Heart left ventricle (tissue), 16 donors: ENCODE measurements at regions of chr17 and their contacts with region 1.

Region 1: DNA sequence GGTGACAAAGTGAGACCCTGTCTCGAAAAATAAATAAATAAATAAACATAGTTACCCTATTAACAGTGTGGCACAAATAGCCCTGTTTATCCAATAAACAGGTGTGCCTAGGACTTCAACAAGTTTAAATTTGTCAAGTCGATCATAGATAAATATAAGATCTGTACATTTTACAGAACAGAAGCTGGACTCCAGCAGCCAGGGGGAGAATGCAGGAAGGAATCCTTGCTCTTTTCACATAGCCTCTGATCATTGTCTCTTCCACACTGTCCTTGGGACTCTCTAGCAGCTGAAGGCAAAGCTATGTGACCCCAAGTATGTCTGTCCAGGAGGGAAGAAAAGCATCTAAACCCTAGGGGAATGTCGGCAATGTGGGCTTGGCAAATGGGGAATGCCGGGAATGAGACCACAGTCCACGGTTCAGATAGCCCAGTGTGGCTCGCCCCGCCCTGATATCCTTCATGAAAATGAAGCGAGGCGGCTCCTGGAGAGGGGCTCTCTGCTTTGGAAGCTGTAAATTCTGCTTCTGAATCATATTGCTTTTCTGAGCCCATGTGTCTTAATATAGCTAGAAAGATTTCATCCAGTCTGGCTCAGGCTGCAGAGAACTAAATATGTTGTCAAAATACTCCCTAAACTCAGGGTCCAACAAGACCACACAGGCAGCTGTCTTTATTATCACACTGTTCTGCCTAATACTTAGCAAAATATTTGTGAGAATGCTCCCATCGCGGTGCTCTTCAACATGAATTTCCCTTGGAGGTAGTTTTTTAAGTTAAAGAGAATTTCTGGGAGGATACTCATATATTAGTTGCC is 24.9 kb upstream of the GRB2 start:
- DNase-seq: no peak
- ATAC-seq: no peak
- H3K4me3 ChIP-seq: no peak overlapping the region
- H3K27ac ChIP-seq: peak overlapping the region in 1 of 12 donors; percentile 73
- H3K4me1 ChIP-seq: peaks cover 0 to 20% (median 5%) of the 10 kb centered on the region in 12 donors
- H3K27me3 ChIP-seq: no peaks in the 10 kb centered on the region
- CTCF ChIP-seq: no peak
- POLR2A ChIP-seq: no peak

Region 2: DNA sequence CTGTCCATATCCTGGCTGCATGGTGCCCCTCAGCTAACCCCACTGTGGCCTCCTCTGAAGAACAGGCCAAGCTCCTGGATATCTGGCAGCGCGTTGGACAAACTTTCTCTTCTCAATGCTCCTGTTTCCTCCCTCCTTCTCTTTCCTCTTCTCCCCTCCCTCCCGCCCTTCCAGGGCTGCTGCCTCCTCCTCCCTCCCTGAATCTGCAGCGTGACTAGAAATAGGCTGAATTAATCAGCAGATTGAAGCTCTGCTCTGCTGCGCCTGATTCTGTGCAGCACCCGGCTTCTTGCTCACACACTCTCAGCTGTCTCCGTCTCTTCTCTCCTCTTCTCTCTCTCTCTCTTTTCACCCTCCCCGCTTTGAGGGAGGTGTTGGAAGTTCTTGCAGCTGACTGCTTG is 45.9 kb after region 1 on chr17:
- intact Hi-C with region 1: loop called in 1 of 10 experiments (anchors 10 kb)
- DNase-seq: peak in 2 of 5 donors; percentile 70 to 73
- ATAC-seq: peak; percentile 76 to 80 (median 78)
- H3K4me3 ChIP-seq: peak overlapping the region in 8 of 12 donors; percentile 16 to 48 (median 32)
- H3K27ac ChIP-seq: peak overlapping the region; percentile 59 to 94 (median 82)
- H3K4me1 ChIP-seq: peaks cover 17 to 70% (median 43%) of the 10 kb centered on the region in 12 donors
- H3K27me3 ChIP-seq: no peaks in the 10 kb centered on the region
- CTCF ChIP-seq: no peak
- POLR2A ChIP-seq: no peak

Region 3: GRCh38 chr17:75524953-75525719 is 94.8 kb after region 1 on chr17 and contains the start of gene LLGL2:
- intact Hi-C with region 1: loop called in 4 of 10 experiments (anchors 2 to 5 kb)
- DNase-seq: peak; percentile 60 to 89 (median 75)
- ATAC-seq: peak; percentile 35 to 86 (median 82)
- H3K4me3 ChIP-seq: peak within 1 kb of the TSS; percentile 28 to 83 (median 71)
- H3K27ac ChIP-seq: peak within 1 kb of the TSS in 11 of 12 donors; percentile 27 to 78 (median 72)
- H3K4me1 ChIP-seq: peaks cover 0 to 22% (median 12%) of the 10 kb centered on the region in 12 donors
- H3K27me3 ChIP-seq: peaks cover 0 to 6% (median 0%) of the 10 kb centered on the region in 9 donors
- CTCF ChIP-seq: peak; percentile 31 to 69 (median 50)
- POLR2A ChIP-seq: no peak
- total RNA-seq, gene LLGL2: 1.8 to 5.9 (median 3.4) TPM

Region 4: GRCh38 chr17:75571197-75571873 is 141.0 kb after region 1 on chr17:
- intact Hi-C with region 1: no loop called
- DNase-seq: peak in 4 of 5 donors; percentile 51 to 65 (median 58)
- ATAC-seq: peak in 3 of 4 donors; percentile 49 to 83 (median 74)
- H3K4me3 ChIP-seq: peak overlapping the region in 1 of 12 donors; percentile 12
- H3K27ac ChIP-seq: peak overlapping the region in 5 of 12 donors; percentile 29 to 86 (median 39)
- H3K4me1 ChIP-seq: peaks cover 0 to 13% (median 0%) of the 10 kb centered on the region in 12 donors
- H3K27me3 ChIP-seq: no peaks in the 10 kb centered on the region
- CTCF ChIP-seq: no peak
- POLR2A ChIP-seq: no peak

Region 5: DNA sequence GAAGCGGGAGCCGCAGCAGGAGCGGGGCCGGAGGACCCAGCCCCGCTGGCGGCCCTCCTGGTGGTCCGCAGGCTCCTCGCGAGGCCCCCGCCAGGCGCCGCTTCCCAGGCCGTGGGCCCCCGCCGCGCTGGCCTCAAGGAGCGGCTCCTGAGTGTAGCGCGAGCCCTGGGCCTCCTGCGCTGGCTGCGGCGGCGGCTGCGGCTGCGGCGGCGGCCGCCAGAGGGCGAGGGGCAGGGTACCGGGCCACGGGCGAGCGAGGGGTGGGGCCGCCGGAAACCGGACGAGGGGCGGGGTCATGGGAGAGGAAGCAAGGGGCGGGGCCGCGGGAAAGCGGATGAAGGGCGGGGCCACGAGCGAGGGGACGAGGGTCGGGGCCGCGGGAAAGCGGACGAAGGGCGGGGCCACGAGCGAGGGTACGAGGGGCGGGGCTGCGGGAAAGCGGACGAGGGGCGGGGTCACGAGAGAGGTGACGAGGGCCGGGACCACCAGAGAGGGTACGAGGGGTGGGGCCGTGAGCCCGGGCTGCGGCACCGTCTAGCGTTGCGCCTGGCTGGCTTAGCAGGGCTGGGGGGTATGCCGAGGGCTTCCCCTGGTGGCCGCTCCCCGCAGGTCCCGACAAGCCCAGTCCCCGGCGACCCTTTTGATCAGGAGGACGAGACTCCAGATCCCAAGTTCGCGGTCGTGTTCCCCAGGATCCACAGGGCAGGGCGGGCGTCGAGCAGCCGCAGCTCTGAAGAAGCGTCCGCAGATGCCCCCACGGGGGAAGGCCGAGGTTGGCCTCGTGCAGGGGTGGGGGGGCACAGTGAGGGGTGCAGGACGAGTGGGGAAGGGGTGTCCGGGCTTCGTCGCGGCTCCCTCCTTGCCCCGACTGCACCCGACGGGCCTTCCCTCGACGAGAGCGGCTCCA is 158.9 kb after region 1 on chr17:
- intact Hi-C with region 1: loop called in 7 of 10 experiments (anchors 1 to 10 kb)
- DNase-seq: peak; percentile 96 to 98 (median 98)
- ATAC-seq: peak; percentile 89 to 95 (median 90)
- H3K4me3 ChIP-seq: peak overlapping the region; percentile 34 to 92 (median 75)
- H3K27ac ChIP-seq: peak overlapping the region; percentile 85 to 98 (median 95)
- H3K4me1 ChIP-seq: peaks cover 0 to 29% (median 14%) of the 10 kb centered on the region in 12 donors
- H3K27me3 ChIP-seq: no peaks in the 10 kb centered on the region
- CTCF ChIP-seq: peak; percentile 20 to 89 (median 64)
- POLR2A ChIP-seq: peak in 1 of 2 donors; percentile 67

Region 6: DNA sequence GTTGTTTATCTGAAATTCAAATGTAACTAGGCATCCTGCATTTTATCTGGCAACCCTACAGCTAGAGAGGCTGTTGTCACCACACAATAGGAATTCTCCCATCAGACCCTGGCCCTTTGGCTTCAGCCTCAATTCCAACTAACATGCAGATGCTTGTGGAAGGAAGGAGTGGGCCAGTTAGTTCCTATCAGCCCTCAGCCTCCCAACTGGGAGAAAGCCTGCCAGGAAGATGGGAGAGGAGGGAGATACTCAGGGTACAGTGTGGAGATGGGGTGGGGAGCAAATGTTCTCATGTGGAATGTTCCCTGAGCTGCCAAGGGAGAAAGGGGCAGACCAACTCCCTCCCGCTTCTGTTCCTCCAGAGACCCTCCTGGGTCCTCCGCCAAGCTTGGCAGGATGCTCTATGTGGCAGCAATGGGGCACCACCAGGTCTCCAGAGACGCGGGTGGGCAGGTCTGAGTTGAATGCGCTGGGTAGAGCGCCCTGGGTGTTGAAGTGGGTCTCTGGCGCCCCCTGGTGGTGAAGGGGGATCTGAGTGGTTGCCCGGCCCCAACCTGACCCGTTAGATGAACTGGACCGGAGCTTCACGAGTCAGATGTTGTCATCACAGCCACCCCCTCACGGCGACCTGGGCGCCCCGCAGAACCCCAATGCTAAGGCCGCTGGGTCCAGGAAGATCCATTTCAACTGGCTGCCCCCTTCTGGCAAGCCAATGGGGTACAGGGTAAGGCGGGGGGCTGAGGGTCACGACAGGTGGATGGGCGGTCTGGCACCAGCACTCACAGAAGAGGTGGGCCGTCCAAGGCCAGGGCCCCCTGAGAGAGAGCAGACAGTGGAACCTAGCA is 319.4 kb after region 1 on chr17:
- intact Hi-C with region 1: loop called in 5 of 10 experiments (anchors 5 to 10 kb)
- DNase-seq: peak; percentile 83 to 93 (median 84)
- ATAC-seq: peak; percentile 63 to 83 (median 70)
- H3K4me3 ChIP-seq: peak overlapping the region in 1 of 12 donors; percentile 5
- H3K27ac ChIP-seq: no peak overlapping the region
- H3K4me1 ChIP-seq: peaks cover 0 to 36% (median 21%) of the 10 kb centered on the region in 12 donors
- H3K27me3 ChIP-seq: no peaks in the 10 kb centered on the region
- CTCF ChIP-seq: peak; percentile 88 to 99 (median 95)
- POLR2A ChIP-seq: no peak